Activated CD8-positive, alpha-beta T cell treated with anti-CD3 and anti-CD28 coated beads for 36 hours (primary cell): ENCODE measurements at regions of chr11 and their contacts with region 1.

Region 1: DNA sequence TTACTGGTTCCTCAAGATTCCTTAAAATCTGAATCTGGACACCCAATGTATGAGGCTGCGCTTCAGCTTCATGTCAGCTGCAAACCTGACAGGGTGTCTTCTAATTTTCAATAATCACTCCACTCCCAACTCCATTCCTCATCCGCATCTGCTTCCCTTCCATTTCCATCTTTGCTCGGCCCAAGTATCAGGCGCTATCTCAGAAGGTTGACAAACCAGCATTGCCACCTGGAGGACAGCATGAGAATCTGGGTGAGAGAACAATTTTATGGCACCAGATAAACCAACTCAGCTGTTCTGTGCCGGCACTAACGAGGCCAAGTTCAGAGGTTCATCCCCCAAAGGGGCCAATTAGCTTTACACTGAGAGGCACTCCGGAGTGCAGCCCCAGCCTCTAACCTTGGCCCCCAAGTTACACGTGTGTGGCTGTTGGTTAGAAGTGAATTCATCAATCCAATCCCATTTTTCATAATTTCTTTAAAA is 79.1 kb upstream of the LMO2 start:
- DNase-seq: peak; percentile 37
- ATAC-seq: peak; percentile 53
- H3K4me3 Mint-ChIP-seq: no peak overlapping the region
- H3K27ac Mint-ChIP-seq: no peak overlapping the region
- H3K4me1 Mint-ChIP-seq: no peaks in the 10 kb centered on the region
- H3K27me3 Mint-ChIP-seq: peaks cover 11% of the 10 kb centered on the region
- CTCF ChIP-seq: peak; percentile 54

Region 2: DNA sequence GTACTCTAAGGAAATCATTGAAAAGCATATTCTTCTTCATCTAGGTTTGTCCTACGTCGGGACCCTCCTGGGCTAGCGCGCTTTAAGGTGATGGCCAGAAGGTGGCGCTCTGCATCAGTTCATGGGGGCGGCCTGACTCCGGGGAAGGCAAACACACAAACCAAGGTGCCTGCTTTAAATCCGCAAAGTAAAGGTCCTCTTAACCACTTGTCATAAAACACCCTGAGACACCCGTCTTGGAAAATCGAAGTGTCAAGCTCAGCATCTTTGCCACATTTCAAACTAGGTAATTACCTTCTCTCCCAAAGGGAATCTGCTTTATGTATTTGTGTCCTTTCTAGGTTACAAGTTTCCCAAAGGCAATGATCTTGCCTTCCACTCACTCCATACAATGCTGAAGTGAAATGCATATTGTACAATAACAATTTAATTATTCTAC is 113.1 kb before region 1 on chr11:
- CTCF ChIA-PET with region 1: interaction called, 38 read pairs
- POLR2A ChIA-PET with region 1: no interaction called
- intact Hi-C with region 1: loop called (anchors 2 kb)
- DNase-seq: peak; percentile 86
- ATAC-seq: peak; percentile 90
- H3K4me3 Mint-ChIP-seq: no peak overlapping the region
- H3K27ac Mint-ChIP-seq: no peak overlapping the region
- H3K4me1 Mint-ChIP-seq: no peaks in the 10 kb centered on the region
- H3K27me3 Mint-ChIP-seq: peaks cover 34% of the 10 kb centered on the region
- CTCF ChIP-seq: peak; percentile 86

Region 3: DNA sequence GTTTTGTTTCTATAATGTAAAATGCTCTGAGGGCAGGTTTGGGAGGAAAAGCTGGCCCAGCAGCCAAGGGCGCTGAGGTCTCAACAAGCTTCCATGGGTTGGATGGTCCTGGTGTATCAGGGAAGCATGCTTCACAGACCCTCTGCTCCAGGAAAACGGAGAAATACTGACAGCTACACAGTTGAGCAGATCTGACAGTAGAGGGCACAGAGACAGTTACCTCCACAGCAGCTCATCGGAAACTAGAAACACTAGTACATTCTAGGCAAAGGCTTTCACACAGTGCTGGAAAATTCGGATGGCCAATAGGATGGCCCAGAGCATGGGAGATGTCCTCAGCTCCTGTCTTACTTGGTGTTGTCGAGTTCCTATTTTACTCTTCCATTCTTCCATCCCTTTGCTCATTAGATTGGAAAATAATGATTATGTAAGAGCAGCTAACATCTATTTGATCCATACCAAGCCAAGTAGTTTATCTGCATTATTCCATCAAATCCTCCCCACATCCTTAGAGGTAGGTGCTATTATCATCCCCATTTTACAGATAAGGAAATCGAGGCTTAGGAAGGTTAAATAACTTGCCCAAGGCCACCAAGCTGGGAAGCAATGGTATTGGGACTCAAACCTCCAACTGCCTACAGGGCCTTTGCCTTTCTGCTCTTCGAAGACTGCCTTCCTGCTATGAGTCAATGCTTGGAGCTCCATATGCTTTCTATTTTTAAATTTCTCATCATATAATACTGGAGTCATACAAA is 107.4 kb before region 1 on chr11:
- CTCF ChIA-PET with region 1: interaction called, 38 read pairs
- POLR2A ChIA-PET with region 1: no interaction called
- intact Hi-C with region 1: no loop called
- DNase-seq: no peak
- ATAC-seq: no peak
- H3K4me3 Mint-ChIP-seq: no peak overlapping the region
- H3K27ac Mint-ChIP-seq: no peak overlapping the region
- H3K4me1 Mint-ChIP-seq: peaks cover 4% of the 10 kb centered on the region
- H3K27me3 Mint-ChIP-seq: peaks cover 58% of the 10 kb centered on the region
- CTCF ChIP-seq: no peak

Region 4: GRCh38 chr11:33869481-33870422 is 101.3 kb before region 1 on chr11:
- CTCF ChIA-PET with region 1: interaction called, 15 read pairs
- POLR2A ChIA-PET with region 1: no interaction called
- intact Hi-C with region 1: no loop called
- DNase-seq: peak; percentile 23
- ATAC-seq: peak; percentile 72
- H3K4me3 Mint-ChIP-seq: peak overlapping the region; percentile 71
- H3K27ac Mint-ChIP-seq: no peak overlapping the region
- H3K4me1 Mint-ChIP-seq: peaks cover 13% of the 10 kb centered on the region
- H3K27me3 Mint-ChIP-seq: peaks cover 62% of the 10 kb centered on the region
- CTCF ChIP-seq: no peak

Region 5: DNA sequence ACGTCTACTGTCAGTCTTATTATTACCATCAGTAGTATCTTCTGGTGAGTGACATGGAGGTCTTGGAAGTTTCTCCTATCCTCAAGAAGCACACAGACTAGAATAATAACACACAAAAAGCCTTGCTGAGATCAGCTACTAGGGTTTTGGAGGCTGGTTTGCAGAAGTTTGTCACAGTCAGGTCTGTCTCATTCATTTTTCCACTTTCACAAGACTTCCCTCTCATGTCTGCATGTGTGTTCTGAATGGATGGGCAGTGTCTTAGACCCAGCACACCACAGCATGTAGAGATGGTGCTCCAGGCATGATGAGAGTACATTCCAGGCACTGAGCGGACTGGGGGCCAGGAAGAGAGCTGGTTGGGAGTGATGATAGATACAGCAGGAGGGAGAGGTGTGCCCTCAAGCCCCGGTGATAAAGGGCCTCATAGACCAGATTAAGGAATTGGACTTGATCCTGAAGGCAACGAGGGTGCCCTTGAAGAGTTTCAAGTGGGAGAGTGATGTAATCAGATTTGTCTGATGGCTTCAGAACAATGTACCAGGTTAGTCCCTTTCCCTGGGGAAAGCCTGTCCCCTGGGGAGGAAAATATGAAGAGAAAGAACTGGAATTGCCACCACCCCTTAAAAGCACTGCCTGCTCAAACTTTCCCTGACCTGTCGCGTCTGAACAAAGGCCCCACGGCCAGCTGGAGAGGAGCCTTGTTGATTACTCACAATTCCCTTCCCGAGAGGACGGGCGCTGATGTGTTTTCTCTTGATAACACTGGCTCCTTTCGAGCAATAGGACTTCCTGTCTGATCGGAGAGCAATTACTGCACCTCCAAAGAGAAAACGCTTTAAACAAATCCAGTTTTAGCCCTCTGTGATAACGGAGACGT is 34.1 kb before region 1 on chr11:
- CTCF ChIA-PET with region 1: no interaction called
- POLR2A ChIA-PET with region 1: no interaction called
- intact Hi-C with region 1: no loop called
- DNase-seq: no peak
- ATAC-seq: no peak
- H3K4me3 Mint-ChIP-seq: no peak overlapping the region
- H3K27ac Mint-ChIP-seq: no peak overlapping the region
- H3K4me1 Mint-ChIP-seq: no peaks in the 10 kb centered on the region
- H3K27me3 Mint-ChIP-seq: peaks cover 5% of the 10 kb centered on the region
- CTCF ChIP-seq: no peak